WTC11 (cell line): ENCODE measurements at regions of chr3 and their contacts with region 1.

Region 1: GRCh38 chr3:25897019-25897418 is 107.1 kb downstream of the OXSM start:
- DNase-seq: peak; percentile 66
- ATAC-seq: peak; percentile 95
- H3K4me3 Mint-ChIP-seq: no peak overlapping the region
- H3K27ac Mint-ChIP-seq: no peak overlapping the region
- H3K4me1 Mint-ChIP-seq: peaks cover 13% of the 10 kb centered on the region
- H3K27me3 Mint-ChIP-seq: peaks cover 10% of the 10 kb centered on the region
- CTCF ChIP-seq: peak; percentile 48; the same call in 1 of the 2 replicates

Region 2: DNA sequence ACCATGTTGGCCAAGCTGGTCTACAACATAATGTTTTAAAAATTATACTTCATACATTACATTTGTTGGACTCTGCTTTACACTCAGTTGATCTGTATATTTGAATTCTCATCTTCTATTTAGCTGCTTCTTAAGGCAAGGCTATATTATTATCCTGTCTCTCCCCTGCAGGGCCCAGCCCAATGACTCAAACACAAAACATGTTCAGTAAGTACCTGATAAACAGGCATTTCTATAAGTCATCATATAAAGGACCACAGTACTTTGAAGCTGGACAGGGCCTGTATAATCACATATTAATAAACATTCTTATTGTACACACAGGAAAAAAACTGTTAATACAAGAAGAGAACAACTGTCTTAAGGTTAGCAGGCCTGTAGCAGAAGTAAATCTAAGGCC is 150.0 kb before region 1 on chr3:
- CTCF ChIA-PET with region 1: no interaction called
- POLR2A ChIA-PET with region 1: interaction called, 10 read pairs
- DNase-seq: no peak
- ATAC-seq: no peak
- H3K4me3 Mint-ChIP-seq: no peak overlapping the region
- H3K27ac Mint-ChIP-seq: no peak overlapping the region
- H3K4me1 Mint-ChIP-seq: peaks cover 25% of the 10 kb centered on the region
- H3K27me3 Mint-ChIP-seq: no peaks in the 10 kb centered on the region
- CTCF ChIP-seq: no peak

Region 3: DNA sequence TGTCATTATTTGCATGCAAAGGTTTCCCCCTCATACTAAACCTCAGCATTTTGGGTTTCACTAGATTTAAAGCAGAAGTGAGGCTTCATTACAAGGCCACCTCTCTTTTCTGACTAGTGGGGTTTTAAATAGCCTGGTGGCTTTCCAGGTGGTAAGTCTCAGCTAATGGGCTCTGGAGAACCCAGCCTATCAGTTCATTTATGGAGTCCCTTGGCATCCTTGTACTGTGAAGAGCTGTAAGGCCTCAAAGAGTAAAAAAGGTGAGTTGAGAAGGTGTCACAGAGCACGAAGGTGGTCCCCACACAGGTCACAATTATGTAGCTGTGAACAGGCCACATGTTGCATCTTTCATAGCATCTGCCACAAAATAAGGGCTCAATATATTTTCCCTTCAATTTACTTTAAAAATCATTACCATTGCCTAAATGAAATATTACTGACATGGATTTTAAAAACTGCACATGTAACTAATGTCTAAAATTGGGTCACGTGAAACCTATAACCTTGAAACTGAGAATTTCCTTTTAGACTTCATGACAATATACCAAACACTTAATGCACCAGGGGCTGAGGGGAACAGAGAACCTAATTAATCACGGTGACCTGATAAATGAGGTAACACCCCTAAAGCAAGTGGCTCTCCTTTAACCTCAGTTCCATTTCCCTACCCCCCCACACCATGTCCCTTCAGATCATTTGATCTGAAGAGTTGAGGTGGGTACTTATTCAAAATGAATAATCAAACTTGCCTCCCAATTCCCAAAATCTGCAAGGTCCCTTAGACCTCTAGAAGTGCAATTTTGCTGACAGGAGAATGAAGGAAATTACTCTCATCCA is 115.0 kb before region 1 on chr3:
- CTCF ChIA-PET with region 1: no interaction called
- POLR2A ChIA-PET with region 1: no interaction called
- DNase-seq: no peak
- ATAC-seq: no peak
- H3K4me3 Mint-ChIP-seq: peak overlapping the region; percentile 83
- H3K27ac Mint-ChIP-seq: no peak overlapping the region
- H3K4me1 Mint-ChIP-seq: peaks cover 32% of the 10 kb centered on the region
- H3K27me3 Mint-ChIP-seq: peaks cover 7% of the 10 kb centered on the region
- CTCF ChIP-seq: no peak

Region 4: GRCh38 chr3:25885544-25885943 is 11.5 kb before region 1 on chr3:
- CTCF ChIA-PET with region 1: no interaction called
- POLR2A ChIA-PET with region 1: no interaction called
- DNase-seq: no peak
- ATAC-seq: no peak
- H3K4me3 Mint-ChIP-seq: no peak overlapping the region
- H3K27ac Mint-ChIP-seq: no peak overlapping the region
- H3K4me1 Mint-ChIP-seq: peaks cover 23% of the 10 kb centered on the region
- H3K27me3 Mint-ChIP-seq: no peaks in the 10 kb centered on the region
- CTCF ChIP-seq: no peak

Region 5: GRCh38 chr3:26015752-26016151 is 118.7 kb after region 1 on chr3:
- CTCF ChIA-PET with region 1: no interaction called
- POLR2A ChIA-PET with region 1: no interaction called
- DNase-seq: peak; percentile 33
- ATAC-seq: peak; percentile 93
- H3K4me3 Mint-ChIP-seq: no peak overlapping the region
- H3K27ac Mint-ChIP-seq: peak overlapping the region; percentile 7; the same call in 1 of the 2 replicates
- H3K4me1 Mint-ChIP-seq: peaks cover 7% of the 10 kb centered on the region
- H3K27me3 Mint-ChIP-seq: no peaks in the 10 kb centered on the region; the same call in 1 of the 2 replicates
- CTCF ChIP-seq: 0 out of 2 replicates have a peak, but pooled peaks have one; percentile 37